CD14-positive monocyte (primary cell): ENCODE measurements at regions of chr10 and their contacts with region 1.

Region 1: GRCh38 chr10:69087590-69088470 is at the start of gene SRGN:
- DNase-seq: peak; percentile 95 to 99 (median 96)
- H3K4me3 ChIP-seq: peak within 1 kb of the TSS; percentile 73 to 99 (median 97)
- H3K4me3 Mint-ChIP-seq: peak within 1 kb of the TSS; percentile 90 to 99
- H3K27ac ChIP-seq: peak within 1 kb of the TSS; percentile 91 to 100
- H3K27ac Mint-ChIP-seq: peak within 1 kb of the TSS; percentile 97 to 100 (median 99)
- H3K4me1 ChIP-seq: peaks cover 60 to 64% of the 10 kb centered on the region in 2 donors
- H3K4me1 Mint-ChIP-seq: peaks cover 47% of the 10 kb centered on the region
- H3K27me3 ChIP-seq: no peaks in the 10 kb centered on the region
- H3K27me3 Mint-ChIP-seq: peaks cover 0 to 2% (median 0%) of the 10 kb centered on the region in 3 donors
- CTCF ChIP-seq: no peak
- polyA plus RNA-seq, gene SRGN: 1,724 to 3,407 (median 1,859) TPM

Region 2: GRCh38 chr10:69004821-69005220 is 83.0 kb before region 1 on chr10:
- intact Hi-C with region 1: loop called (anchors 2 to 5 kb)
- DNase-seq: peak; percentile 41 to 75 (median 63)
- H3K4me3 ChIP-seq: no peak overlapping the region
- H3K4me3 Mint-ChIP-seq: no peak overlapping the region
- H3K27ac ChIP-seq: peak overlapping the region in 1 of 2 donors; percentile 51
- H3K27ac Mint-ChIP-seq: peak overlapping the region in 4 of 7 donors; percentile 30 to 77 (median 64)
- H3K4me1 ChIP-seq: peaks cover 0 to 4% of the 10 kb centered on the region in 2 donors
- H3K4me1 Mint-ChIP-seq: peaks cover 19% of the 10 kb centered on the region
- H3K27me3 ChIP-seq: no peaks in the 10 kb centered on the region
- H3K27me3 Mint-ChIP-seq: no peaks in the 10 kb centered on the region
- CTCF ChIP-seq: peak; percentile 75

Region 3: DNA sequence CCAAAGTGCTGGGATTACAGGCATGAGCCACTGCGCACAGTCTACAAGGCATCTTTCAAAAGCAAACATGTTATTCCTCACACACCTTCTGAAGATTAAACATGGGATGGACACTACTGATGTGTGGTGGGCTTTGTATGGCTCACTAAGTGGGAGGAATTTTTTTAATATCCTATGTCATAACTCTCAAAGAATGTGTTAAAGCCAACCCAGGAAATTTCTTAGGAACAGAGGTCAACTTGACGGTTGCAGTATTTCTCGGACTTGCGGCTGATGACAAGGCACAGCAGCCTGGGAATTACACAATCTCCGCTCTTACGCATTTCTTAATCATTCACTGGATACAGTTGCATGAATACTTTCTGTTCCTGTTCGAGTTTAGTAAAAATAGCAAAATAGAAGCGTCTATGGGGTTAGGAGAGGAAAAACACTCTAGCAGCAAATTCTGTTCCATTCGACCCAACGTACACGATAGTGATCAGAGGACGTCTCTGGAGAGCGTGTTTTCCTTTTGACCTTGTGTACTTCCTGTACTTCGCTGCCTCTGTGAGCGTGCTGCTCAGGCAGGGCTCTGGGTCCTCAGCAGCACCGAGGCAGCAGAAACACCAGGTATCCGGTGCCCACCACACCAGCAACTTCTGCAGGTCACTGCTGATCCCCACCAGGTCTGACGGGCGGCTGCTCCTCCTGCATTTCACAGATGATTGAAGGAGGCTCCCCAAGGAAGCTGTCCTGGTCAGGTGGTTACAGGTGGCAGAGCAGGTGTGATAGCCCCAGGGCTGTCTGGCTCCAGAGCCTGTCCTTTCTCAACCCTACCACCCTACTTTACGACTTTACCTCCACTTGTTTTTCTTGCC is 26.3 kb before region 1 on chr10:
- intact Hi-C with region 1: loop called (anchors 1 to 2 kb)
- DNase-seq: peak; percentile 96 to 99 (median 99)
- H3K4me3 ChIP-seq: peak overlapping the region; percentile 23 to 62 (median 28)
- H3K4me3 Mint-ChIP-seq: peak overlapping the region; percentile 64 to 77
- H3K27ac ChIP-seq: peak overlapping the region; percentile 99 to 100
- H3K27ac Mint-ChIP-seq: peak overlapping the region; percentile 98 to 100 (median 99)
- H3K4me1 ChIP-seq: peaks cover 96 to 98% of the 10 kb centered on the region in 2 donors
- H3K4me1 Mint-ChIP-seq: peaks cover 83% of the 10 kb centered on the region
- H3K27me3 ChIP-seq: no peaks in the 10 kb centered on the region
- H3K27me3 Mint-ChIP-seq: peaks cover 0 to 2% (median 0%) of the 10 kb centered on the region in 3 donors
- CTCF ChIP-seq: no peak

Region 4: DNA sequence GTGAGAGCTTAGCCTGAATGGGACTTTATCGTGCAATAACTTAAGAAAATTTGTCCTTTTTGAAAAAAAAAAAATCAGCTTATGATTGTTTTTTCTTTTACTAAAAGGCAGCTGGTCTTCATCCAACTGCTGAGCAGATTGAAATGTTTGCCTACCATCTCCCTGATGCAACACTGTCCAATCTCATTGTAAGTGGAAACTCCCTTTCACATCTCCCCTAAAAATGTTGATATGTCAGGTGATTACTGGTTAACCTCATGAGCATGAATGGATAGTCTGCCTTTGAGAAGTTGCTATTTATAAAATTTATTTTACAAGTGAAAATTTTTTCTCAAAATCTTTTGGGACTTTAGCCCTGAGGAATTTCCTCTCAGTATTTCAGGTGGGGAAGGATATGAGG is 114.5 kb after region 1 on chr10:
- intact Hi-C with region 1: no loop called
- DNase-seq: no peak
- H3K4me3 ChIP-seq: no peak overlapping the region
- H3K4me3 Mint-ChIP-seq: no peak overlapping the region
- H3K27ac ChIP-seq: no peak overlapping the region
- H3K27ac Mint-ChIP-seq: no peak overlapping the region
- H3K4me1 ChIP-seq: no peaks in the 10 kb centered on the region
- H3K4me1 Mint-ChIP-seq: no peaks in the 10 kb centered on the region
- H3K27me3 ChIP-seq: no peaks in the 10 kb centered on the region
- H3K27me3 Mint-ChIP-seq: peaks cover 0 to 3% (median 2%) of the 10 kb centered on the region in 3 donors
- CTCF ChIP-seq: no peak